ENCODE measurements at regions of chr12 and their contacts with region 1.

Region 1: DNA sequence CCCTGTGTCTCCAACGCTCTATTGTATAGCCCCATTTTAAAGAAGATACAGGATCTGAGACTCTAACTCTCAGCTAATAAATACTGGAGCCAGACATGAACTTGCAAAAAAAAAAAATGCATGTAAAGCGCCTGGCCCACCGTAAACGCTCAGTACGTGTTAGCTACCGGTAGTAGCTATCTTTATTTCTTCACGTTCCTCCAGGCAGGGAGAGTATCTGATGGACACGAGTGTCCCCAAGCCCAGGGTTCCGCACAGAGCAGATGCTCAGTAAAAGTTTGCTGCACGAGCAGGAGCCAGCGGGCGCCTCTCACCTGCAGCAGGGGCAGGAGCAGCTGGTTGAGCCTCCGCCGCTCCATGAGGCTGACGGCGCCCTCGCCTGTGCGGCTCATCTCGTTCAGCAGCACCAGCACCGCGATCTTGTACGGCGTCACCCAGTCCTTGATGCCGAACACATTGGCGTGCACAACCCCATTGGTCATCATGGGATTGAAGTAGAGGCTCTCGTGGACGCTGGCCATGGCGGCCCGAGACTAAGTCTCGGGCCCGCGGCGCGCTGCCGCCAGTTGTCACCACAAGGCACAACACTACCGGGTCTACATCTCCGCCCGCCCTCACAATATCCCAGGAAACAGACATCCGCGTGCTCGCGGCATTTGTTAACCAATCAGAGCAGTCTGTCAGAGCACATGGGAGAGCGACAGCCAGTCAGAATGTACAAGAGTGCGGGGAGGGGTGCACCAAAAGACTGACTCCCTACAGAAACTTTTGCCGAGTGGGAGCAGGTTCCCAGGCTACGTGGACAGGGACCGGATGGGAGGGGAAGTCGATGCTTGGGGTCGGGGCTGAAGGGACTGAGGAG is at the start of gene ANAPC5:
- DNase-seq: peak; percentile 98
- ATAC-seq: peak; percentile 99
- H3K4me3 ChIP-seq: peak within 1 kb of the TSS; percentile 88
- H3K27ac ChIP-seq: peak within 1 kb of the TSS; percentile 77
- H3K4me1 ChIP-seq: no peaks in the 10 kb centered on the region; the same call in 1 of the 2 replicates
- H3K27me3 ChIP-seq: no peaks in the 10 kb centered on the region
- CTCF ChIP-seq: peak in 1 of 3 experiments; percentile 1; a peak in 1 of 6 replicates
- EP300 ChIP-seq: no peak
- POLR2A ChIP-seq: peak; percentile 95
- RAD21 ChIP-seq: no peak
- polyA plus RNA-seq, gene ANAPC5: 102 to 142 TPM

Region 2: DNA sequence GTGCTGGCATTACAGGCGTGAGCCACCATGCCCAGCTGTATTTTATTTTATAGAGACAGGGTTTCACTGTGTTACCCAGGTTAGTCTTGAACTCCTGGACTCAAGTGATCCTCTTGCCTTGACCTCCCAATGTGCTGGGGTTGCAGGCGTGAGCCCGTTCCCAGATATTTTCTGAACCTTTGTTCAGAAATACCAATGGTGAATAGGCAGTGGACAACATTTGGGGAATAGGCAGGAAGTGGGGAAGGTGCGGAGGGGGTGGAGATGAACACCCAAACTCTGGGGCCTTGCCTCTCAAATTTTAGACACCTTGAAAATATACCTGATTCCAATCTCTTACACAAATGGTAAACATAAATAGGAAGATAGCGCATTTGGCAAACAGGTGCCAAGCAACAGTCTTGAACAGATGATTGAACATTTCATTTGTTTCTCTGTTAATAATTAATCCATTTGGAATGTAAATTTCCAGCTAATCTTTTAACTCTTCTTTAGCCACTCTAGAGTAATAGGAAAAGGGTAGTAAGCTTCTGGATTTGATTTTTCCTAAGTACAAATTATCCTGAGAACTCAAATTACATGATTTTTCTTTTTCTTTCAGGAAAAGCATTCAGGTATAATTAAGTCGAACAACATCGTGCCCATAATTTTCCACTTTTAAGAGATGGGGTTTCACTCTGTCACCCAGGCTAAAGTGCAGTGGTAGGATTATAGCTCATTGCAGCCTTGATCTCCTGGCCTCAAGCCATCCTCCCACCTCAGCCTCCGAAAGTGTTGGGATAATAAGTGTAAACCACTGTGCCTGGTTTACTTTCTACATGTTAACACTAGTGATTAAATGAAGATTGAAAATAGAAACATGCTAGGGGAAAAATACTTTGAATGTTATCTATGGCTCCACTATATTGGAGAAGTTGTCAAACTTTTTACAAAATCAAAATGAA is 25.0 kb after region 1 on chr12:
- CTCF ChIA-PET with region 1: no interaction called
- POLR2A ChIA-PET with region 1: interaction called, 10 read pairs
- RAD21 ChIA-PET with region 1: no interaction called
- SMC1A ChIA-PET with region 1: no interaction called
- in situ Hi-C with region 1: no loop called
- intact Hi-C with region 1: no loop called
- DNase-seq: no peak
- ATAC-seq: no peak
- H3K4me3 ChIP-seq: no peak overlapping the region
- H3K27ac ChIP-seq: no peak overlapping the region
- H3K4me1 ChIP-seq: no peaks in the 10 kb centered on the region
- H3K27me3 ChIP-seq: no peaks in the 10 kb centered on the region
- CTCF ChIP-seq: no peak
- EP300 ChIP-seq: no peak
- POLR2A ChIP-seq: no peak
- RAD21 ChIP-seq: no peak

Region 3: GRCh38 chr12:121399391-121400331 is 47.6 kb after region 1 on chr12 and contains the start of gene RNF34:
- CTCF ChIA-PET with region 1: interaction called, 6 read pairs
- POLR2A ChIA-PET with region 1: interaction called, 28 read pairs
- RAD21 ChIA-PET with region 1: interaction called, 23 read pairs
- SMC1A ChIA-PET with region 1: interaction called, 17 read pairs
- in situ Hi-C with region 1: no loop called
- intact Hi-C with region 1: loop called (anchors 1 kb)
- DNase-seq: peak; percentile 88
- ATAC-seq: peak; percentile 94
- H3K4me3 ChIP-seq: peak within 1 kb of the TSS; percentile 95
- H3K27ac ChIP-seq: peak within 1 kb of the TSS; percentile 93
- H3K4me1 ChIP-seq: no peaks in the 10 kb centered on the region; the same call in 1 of the 2 replicates
- H3K27me3 ChIP-seq: no peaks in the 10 kb centered on the region
- CTCF ChIP-seq: no peak
- EP300 ChIP-seq: no peak
- POLR2A ChIP-seq: peak; percentile 99
- RAD21 ChIP-seq: no peak
- polyA plus RNA-seq, gene RNF34: 111 to 121 TPM

Region 4: GRCh38 chr12:121423682-121424623 is 71.9 kb after region 1 on chr12:
- CTCF ChIA-PET with region 1: no interaction called
- POLR2A ChIA-PET with region 1: interaction called, 4 read pairs
- RAD21 ChIA-PET with region 1: interaction called, 6 read pairs
- SMC1A ChIA-PET with region 1: interaction called, 5 read pairs
- in situ Hi-C with region 1: loop called (anchors 25 kb)
- intact Hi-C with region 1: loop called (anchors 1 kb)
- DNase-seq: no peak
- ATAC-seq: no peak
- H3K4me3 ChIP-seq: no peak overlapping the region
- H3K27ac ChIP-seq: 0 out of 2 replicates have a peak overlapping the region, but pooled peaks have one; percentile 6
- H3K4me1 ChIP-seq: peaks cover 22% of the 10 kb centered on the region
- H3K27me3 ChIP-seq: no peaks in the 10 kb centered on the region
- CTCF ChIP-seq: no peak
- EP300 ChIP-seq: no peak
- POLR2A ChIP-seq: no peak; the same call in 1 of the 2 replicates
- RAD21 ChIP-seq: no peak

Measured in GM12878 (cell line).